ENCODE measurements at regions of chr20 and their contacts with region 1.

Region 1: DNA sequence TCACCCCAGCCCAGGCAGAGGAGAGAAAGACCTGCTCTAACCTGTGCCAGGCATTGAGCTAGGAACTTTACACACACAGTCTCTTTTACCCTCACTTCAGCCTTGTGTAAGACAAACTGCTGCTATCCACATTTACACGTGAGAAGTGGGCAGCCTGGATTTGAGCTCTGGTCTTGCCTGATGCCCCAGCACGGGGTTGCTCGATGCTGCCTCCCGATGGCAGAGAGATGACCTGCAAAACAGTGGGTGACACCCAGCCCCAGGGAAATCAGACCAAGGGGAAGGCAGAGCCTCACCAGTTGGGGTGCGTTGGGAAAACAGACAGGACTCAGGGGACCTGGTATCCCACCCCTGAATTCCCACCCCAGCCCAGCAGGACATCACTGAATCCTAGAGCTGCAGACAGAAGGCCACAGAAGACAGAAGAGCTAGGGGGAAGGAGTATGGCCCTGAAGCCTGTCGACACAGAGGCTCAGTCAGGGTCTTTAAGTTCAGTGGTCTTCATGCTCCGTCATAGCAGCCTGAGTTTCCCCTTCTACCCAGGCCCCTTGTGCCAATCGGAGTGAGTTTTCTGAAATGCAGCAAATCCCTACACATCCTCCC is 990 bp downstream of the BPI start:
- DNase-seq: peak; percentile 38
- ATAC-seq: peak; percentile 86
- H3K4me3 ChIP-seq: no peak overlapping the region
- H3K27ac ChIP-seq: no peak overlapping the region
- H3K4me1 ChIP-seq: no peaks in the 10 kb centered on the region
- H3K27me3 ChIP-seq: peaks cover 21% of the 10 kb centered on the region
- CTCF ChIP-seq: peak; percentile 61
- POLR2A ChIP-seq: no peak
- RAD21 ChIP-seq: peak; percentile 70

Region 2: DNA sequence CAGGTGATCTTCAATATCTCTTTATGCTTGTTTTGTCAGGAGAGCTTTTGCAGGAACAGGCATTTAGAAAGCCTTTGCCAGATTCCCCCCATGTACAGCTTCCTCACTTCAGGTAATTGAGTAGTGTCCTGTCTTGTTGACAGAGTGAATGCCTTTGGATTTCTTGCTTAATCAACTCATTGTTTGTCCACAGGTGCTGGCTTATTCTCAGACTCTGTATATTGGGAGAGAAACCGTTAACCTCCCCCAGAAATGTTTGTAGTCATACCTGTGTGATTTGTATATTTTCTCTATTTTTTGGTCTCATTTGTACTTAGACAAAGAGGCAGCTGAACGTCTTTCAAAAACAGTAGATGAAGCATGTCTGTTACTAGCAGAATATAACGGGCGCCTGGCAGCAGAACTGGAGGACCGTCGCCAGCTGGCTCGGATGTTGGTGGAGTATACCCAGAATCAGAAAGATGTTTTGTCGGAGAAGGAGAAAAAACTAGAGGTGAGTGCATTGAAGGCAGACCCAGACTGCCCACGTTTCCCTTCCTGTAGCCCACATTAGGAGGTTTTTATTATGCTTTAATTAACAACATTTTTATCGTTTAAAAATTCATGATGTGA is 239.1 kb before region 1 on chr20:
- CTCF ChIA-PET with region 1: no interaction called
- POLR2A ChIA-PET with region 1: no interaction called
- dilution Hi-C with region 1: no loop called
- in situ Hi-C with region 1: loop called (anchors 10 kb)
- intact Hi-C with region 1: no loop called
- DNase-seq: no peak
- ATAC-seq: no peak
- H3K4me3 ChIP-seq: no peak overlapping the region
- H3K27ac ChIP-seq: no peak overlapping the region
- H3K4me1 ChIP-seq: 0 out of 2 replicates have a peak, but pooled peaks cover 2% of the 10 kb centered on the region
- H3K27me3 ChIP-seq: no peaks in the 10 kb centered on the region
- CTCF ChIP-seq: no peak
- POLR2A ChIP-seq: no peak
- RAD21 ChIP-seq: no peak

Region 3: GRCh38 chr20:38239441-38239840 is 65.5 kb before region 1 on chr20:
- CTCF ChIA-PET with region 1: interaction called, 3 read pairs
- POLR2A ChIA-PET with region 1: no interaction called
- dilution Hi-C with region 1: no loop called
- in situ Hi-C with region 1: loop called (anchors 5 kb)
- intact Hi-C with region 1: no loop called
- DNase-seq: no peak
- ATAC-seq: no peak
- H3K4me3 ChIP-seq: no peak overlapping the region
- H3K27ac ChIP-seq: no peak overlapping the region
- H3K4me1 ChIP-seq: no peaks in the 10 kb centered on the region
- H3K27me3 ChIP-seq: peaks cover 2% of the 10 kb centered on the region; the same call in 1 of the 2 replicates
- CTCF ChIP-seq: no peak
- POLR2A ChIP-seq: no peak
- RAD21 ChIP-seq: no peak

Region 4: GRCh38 chr20:38255393-38255792 is 49.6 kb before region 1 on chr20:
- CTCF ChIA-PET with region 1: no interaction called
- POLR2A ChIA-PET with region 1: no interaction called
- dilution Hi-C with region 1: no loop called
- in situ Hi-C with region 1: no loop called
- intact Hi-C with region 1: no loop called
- DNase-seq: peak; percentile 59
- ATAC-seq: peak; percentile 18; the same call in 1 of the 2 replicates
- H3K4me3 ChIP-seq: no peak overlapping the region
- H3K27ac ChIP-seq: peak overlapping the region; percentile 31; the same call in 1 of the 2 replicates
- H3K4me1 ChIP-seq: peaks cover 31% of the 10 kb centered on the region
- H3K27me3 ChIP-seq: no peaks in the 10 kb centered on the region
- CTCF ChIP-seq: no peak
- POLR2A ChIP-seq: no peak
- RAD21 ChIP-seq: no peak